HEK293T (cell line): ENCODE measurements at regions of chr17 and their contacts with region 1.

Region 1: GRCh38 chr17:7444682-7445618 is at the start of gene CHRNB1:
- DNase-seq: peak; percentile 40

Region 2: GRCh38 chr17:7363311-7363710 is 81.6 kb before region 1 on chr17:
- CTCF ChIA-PET with region 1: no interaction called
- POLR2A ChIA-PET with region 1: no interaction called
- DNase-seq: no peak

Region 3: GRCh38 chr17:7403977-7404736 is 40.8 kb before region 1 on chr17 and contains the start of gene TMEM256:
- CTCF ChIA-PET with region 1: no interaction called
- POLR2A ChIA-PET with region 1: interaction called, 25 read pairs
- DNase-seq: peak; percentile 93

Region 4: GRCh38 chr17:7416323-7416722 is 28.6 kb before region 1 on chr17:
- CTCF ChIA-PET with region 1: no interaction called
- POLR2A ChIA-PET with region 1: no interaction called
- DNase-seq: no peak

Region 5: GRCh38 chr17:7454980-7455379 is 10.0 kb after region 1 on chr17:
- CTCF ChIA-PET with region 1: no interaction called
- POLR2A ChIA-PET with region 1: interaction called, 14 read pairs
- DNase-seq: no peak

Region 6: DNA sequence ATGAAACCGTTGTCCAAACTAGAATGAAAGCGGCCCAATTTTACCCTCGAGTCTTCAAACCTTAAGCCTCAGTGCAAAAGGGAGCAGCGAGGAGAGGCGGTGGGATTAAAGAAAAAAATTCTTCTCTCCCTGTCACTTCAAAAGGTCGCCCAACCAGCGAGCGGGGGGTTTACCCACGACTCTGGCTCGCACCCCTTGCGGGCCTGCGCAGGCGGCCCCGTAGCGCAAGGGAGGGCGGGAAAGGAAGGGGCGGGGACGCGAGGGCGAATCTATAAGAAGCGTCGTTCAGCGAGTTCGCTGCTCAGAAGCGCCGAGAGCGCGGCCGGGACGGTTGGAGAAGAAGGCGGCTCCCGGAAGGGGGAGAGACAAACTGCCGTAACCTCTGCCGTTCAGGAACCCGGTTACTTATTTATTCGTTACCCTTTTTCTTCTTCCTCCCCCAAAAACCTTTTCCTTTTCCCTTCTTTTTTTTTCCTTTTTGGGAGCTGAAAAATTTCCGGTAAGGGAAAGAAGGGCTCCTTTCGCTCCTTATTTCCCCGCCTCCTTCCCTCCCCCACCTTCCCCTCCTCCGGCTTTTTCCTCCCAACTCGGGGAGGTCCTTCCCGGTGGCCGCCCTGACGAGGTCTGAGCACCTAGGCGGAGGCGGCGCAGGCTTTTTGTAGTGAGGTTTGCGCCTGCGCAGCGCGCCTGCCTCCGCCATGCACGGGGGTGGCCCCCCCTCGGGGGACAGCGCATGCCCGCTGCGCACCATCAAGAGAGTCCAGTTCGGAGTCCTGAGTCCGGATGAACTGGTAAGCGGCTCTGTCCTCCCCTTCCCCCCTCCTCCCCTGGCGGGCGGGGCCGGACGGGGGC is 39.3 kb after region 1 on chr17 and contains the start of gene POLR2A:
- CTCF ChIA-PET with region 1: no interaction called
- POLR2A ChIA-PET with region 1: interaction called, 55 read pairs
- DNase-seq: peak; percentile 96

Region 7: DNA sequence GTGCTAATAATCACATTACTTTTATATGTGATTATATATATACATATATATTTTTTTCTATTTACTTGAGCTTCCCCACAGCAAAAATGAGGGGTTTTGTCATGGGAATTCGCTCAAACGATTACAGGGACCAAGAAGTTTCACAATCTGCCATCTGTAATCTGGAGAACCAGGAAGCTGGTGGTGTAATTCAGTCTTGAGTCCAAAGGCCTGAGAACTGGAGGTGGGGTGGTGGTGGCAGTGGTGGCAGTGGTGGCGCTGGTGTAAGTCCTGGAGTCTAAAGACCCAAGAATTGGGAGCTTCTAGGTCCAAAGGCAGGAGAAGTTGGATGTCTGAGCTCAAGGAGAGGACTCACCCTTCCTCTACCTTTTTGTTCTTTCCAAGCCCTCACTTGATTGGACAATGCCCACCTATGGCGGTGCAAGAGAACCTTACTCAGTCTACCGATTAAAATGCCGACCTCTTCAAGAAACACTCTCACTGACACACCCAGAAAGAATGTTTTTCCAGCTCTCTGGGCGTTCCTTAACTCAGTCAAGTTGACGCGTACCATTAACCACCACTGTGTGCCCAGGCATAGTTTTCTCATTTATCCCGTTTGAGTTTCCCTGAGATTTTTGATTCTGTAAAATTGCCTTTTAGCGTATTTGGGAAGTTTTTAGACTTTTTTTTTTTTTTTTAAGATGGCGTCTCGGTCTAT is 71.1 kb after region 1 on chr17:
- CTCF ChIA-PET with region 1: no interaction called
- POLR2A ChIA-PET with region 1: no interaction called
- DNase-seq: no peak